Spleen (tissue), 13 donors: ENCODE measurements at regions of chr14 and their contacts with region 1.

Region 1: DNA sequence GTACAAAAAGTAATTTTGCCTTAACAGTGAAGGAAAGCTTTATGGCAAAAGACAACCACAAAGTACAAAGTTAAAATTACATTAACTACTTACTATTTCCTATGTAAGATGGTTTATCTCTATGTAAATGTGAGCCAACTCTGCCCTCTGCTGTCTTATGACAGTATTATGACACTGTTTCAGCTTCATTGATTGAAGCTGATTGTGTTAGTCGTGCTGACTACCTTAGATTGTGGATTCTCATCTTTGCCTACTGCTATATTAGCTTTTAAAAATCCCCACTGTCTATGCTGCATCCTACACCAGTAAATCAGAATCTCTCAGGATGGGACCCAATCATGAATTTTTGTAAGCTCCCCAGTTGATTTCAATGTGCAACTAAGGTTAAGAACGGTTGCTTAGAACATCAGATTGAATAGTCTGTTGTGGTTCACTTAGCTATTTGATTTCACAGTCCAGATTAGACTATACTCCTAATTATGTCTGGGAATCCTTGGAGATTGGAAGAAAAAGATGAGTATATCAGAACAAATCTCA is 12.2 kb upstream of the SPTB start:
- DNase-seq: no peak
- H3K4me3 ChIP-seq: no peak overlapping the region
- H3K27ac ChIP-seq: no peak overlapping the region
- H3K4me1 ChIP-seq: no peaks in the 10 kb centered on the region
- H3K27me3 ChIP-seq: peaks cover 0 to 16% (median 0%) of the 10 kb centered on the region in 7 donors
- CTCF ChIP-seq: peak in 10 of 11 experiments; percentile 25 to 76 (median 61)
- POLR2A ChIP-seq: no peak

Region 2: DNA sequence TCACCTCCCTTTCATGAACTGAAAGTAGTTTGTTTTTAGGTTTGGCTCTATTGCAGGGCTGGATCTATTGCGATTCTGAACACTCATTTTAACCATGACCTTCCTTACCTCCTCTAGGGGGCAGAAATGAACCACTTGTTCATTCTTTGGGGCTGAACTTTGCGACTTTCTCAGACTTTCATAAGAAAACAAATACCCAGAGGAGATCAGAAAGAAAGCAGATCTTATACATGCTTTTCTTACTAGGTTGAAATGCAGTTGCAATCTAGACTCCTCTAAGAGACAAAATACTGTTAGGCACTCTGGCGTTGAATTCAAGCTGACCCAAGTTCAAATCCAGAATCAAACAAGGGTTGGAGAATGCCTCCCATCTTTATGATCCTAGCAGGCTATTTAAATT is 220.3 kb before region 1 on chr14:
- intact Hi-C with region 1: loop called (anchors 5 kb)
- DNase-seq: no peak
- H3K4me3 ChIP-seq: no peak overlapping the region
- H3K27ac ChIP-seq: peak overlapping the region in 1 of 8 donors; percentile 86
- H3K4me1 ChIP-seq: peaks cover 0 to 53% (median 22%) of the 10 kb centered on the region in 6 donors
- H3K27me3 ChIP-seq: no peaks in the 10 kb centered on the region
- CTCF ChIP-seq: peak; percentile 40 to 82 (median 65)
- POLR2A ChIP-seq: no peak

Region 3: DNA sequence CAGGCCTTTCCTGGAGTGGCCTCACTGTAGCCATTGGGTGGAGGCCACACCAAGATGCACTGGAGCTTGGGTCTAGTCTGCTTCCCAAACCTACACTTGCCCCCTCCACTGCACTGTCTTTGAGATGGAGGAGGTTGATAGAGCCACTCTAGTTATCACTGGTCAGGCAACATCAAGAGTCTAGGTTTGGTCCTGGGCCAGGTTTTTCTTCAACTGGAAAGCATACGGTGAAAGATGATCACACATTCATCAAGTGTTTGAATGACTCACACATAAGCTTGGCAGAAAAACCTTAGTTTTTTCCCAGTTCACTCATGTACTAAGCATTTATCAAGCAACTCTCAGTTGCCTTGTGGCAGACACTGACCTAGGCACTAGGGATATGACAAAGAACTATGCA is 103.2 kb before region 1 on chr14:
- intact Hi-C with region 1: no loop called
- DNase-seq: no peak
- H3K4me3 ChIP-seq: no peak overlapping the region
- H3K27ac ChIP-seq: no peak overlapping the region
- H3K4me1 ChIP-seq: peaks cover 0 to 17% (median 8%) of the 10 kb centered on the region in 6 donors
- H3K27me3 ChIP-seq: no peaks in the 10 kb centered on the region
- CTCF ChIP-seq: no peak
- POLR2A ChIP-seq: no peak

Region 4: GRCh38 chr14:64823305-64823861 is 68.5 kb before region 1 on chr14:
- intact Hi-C with region 1: loop called (anchors 5 kb)
- DNase-seq: peak; percentile 92
- H3K4me3 ChIP-seq: peak overlapping the region in 1 of 8 donors; percentile 39
- H3K27ac ChIP-seq: no peak overlapping the region
- H3K4me1 ChIP-seq: peaks cover 0 to 25% (median 10%) of the 10 kb centered on the region in 6 donors
- H3K27me3 ChIP-seq: peaks cover 0 to 12% (median 7%) of the 10 kb centered on the region in 7 donors
- CTCF ChIP-seq: peak; percentile 56 to 87 (median 78)
- POLR2A ChIP-seq: no peak